PC-3 (cell line): ENCODE measurements at regions of chr15 and their contacts with region 1.

Region 1: DNA sequence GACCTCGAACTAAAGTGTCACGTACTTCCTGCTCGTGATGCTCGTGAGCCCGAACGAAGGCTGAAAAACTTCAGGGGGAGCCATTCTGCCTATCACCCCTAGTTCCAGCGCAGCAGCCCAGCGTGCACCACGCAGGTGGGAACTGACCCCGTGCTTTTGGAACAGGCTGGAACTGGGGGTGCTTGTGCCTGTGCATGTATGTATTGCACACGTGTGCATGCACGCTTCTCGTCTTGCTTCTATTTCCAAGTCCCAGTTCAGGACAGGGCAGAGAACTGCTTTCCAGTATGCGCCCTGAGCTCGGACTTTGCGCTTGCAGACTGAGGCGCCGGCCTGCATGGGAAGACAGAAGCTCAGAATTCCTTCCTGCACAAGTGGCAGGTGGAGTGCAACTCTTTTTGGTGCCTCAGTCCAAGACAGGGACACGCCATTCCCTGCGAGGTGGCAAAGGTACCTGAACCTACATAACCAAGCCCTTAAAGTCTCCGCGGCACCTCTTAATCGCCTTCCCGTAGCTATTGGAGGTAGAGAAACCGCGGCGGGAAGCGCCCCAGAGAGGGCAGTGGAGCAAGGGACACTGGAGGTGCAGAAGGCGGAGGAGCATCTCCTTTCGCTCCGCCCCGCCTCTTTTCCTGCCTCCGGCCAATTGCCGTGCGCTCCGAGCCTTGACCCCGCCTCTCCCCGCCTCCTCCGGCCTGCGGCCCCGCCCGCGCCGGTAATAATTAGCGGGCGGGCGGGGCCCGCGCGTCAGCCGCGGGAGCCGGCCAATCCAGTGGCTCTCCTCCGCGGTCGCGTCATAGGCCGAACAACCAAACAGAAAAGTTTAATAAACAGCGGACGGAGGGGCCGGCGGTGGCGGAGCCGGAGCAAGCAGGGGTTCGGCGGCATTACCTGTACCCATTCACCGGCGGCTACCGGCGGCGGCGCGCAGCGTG is at the start of gene ZFAND6:
- DNase-seq: peak; percentile 96
- ATAC-seq: peak; percentile 87
- H3K4me3 ChIP-seq: peak within 1 kb of the TSS; percentile 88
- H3K27ac ChIP-seq: peak within 1 kb of the TSS; percentile 66
- H3K4me1 ChIP-seq: peaks cover 12% of the 10 kb centered on the region; the same call in 1 of the 2 replicates
- H3K27me3 ChIP-seq: no peaks in the 10 kb centered on the region
- CTCF ChIP-seq: no peak
- total RNA-seq, gene ZFAND6: 50.2 and 96.6 TPM in 2 replicates

Region 2: GRCh38 chr15:79896637-79897379 is 162.3 kb before region 1 on chr15 and contains the start of gene MTHFS:
- CTCF ChIA-PET with region 1: no interaction called
- POLR2A ChIA-PET with region 1: no interaction called
- intact Hi-C with region 1: loop called (anchors 10 kb)
- DNase-seq: peak; percentile 86
- ATAC-seq: peak; percentile 95
- H3K4me3 ChIP-seq: peak within 1 kb of the TSS; percentile 74
- H3K27ac ChIP-seq: peak within 1 kb of the TSS; percentile 65
- H3K4me1 ChIP-seq: peaks cover 24% of the 10 kb centered on the region
- H3K27me3 ChIP-seq: no peaks in the 10 kb centered on the region
- CTCF ChIP-seq: peak; percentile 52
- total RNA-seq, gene MTHFS: 28.8 and 53.1 TPM in 2 replicates

Region 3: GRCh38 chr15:79923515-79924395 is 135.4 kb before region 1 on chr15:
- CTCF ChIA-PET with region 1: interaction called, 4 read pairs
- POLR2A ChIA-PET with region 1: no interaction called
- intact Hi-C with region 1: loop called (anchors 1 kb)
- DNase-seq: peak; percentile 98
- ATAC-seq: peak; percentile 94
- H3K4me3 ChIP-seq: peak overlapping the region; percentile 100
- H3K27ac ChIP-seq: peak overlapping the region; percentile 87
- H3K4me1 ChIP-seq: peaks cover 4% of the 10 kb centered on the region; the same call in 1 of the 2 replicates
- H3K27me3 ChIP-seq: no peaks in the 10 kb centered on the region
- CTCF ChIP-seq: no peak

Region 4: GRCh38 chr15:80152180-80152845 is 93.2 kb after region 1 on chr15:
- CTCF ChIA-PET with region 1: interaction called, 3 read pairs
- POLR2A ChIA-PET with region 1: interaction called, 6 read pairs
- intact Hi-C with region 1: loop called (anchors 1 kb)
- DNase-seq: peak; percentile 86
- ATAC-seq: peak; percentile 69
- H3K4me3 ChIP-seq: peak overlapping the region; percentile 67
- H3K27ac ChIP-seq: no peak overlapping the region
- H3K4me1 ChIP-seq: peaks cover 9% of the 10 kb centered on the region; the same call in 1 of the 2 replicates
- H3K27me3 ChIP-seq: no peaks in the 10 kb centered on the region
- CTCF ChIP-seq: no peak